ENCODE measurements at regions of chr11 and their contacts with region 1.

Region 1: DNA sequence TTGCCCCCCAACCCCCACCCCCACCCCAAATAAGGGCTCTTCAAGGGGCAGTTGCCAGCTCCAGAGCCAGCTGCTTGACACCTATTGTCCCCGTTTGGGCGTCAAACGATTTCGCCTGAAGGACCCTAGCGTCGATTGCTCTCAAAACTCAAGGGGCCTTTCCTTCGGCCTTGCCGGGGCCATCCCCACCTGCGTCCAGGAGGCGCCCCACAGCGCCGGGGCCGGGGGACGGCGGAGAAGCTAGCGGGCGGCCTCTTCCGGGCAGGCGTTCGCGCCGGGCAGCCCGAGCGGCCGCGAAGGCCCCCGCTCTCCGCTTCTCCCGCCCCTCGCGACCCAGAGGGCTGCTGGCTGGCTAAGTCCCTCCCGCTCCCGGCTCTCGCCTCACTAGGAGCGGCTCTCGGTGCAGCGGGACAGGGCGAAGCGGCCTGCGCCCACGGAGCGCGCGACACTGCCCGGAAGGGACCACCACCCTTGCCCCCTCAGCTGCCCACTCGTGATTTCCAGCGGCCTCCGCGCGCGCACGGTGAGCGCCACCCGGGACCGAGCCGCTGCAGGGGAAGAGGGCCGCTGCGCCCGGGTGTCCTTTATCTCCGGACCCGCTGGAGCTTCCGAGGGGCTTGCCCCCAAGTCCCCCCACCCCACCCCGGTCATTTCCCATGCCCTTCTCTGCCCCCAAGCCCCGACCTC is at the start of gene CAPRIN1:
- DNase-seq: peak; percentile 89
- H3K4me3 ChIP-seq: peak within 1 kb of the TSS; percentile 65 to 97 (median 97)
- H3K27ac ChIP-seq: peak within 1 kb of the TSS; percentile 100
- H3K4me1 ChIP-seq: peaks cover 34% of the 10 kb centered on the region
- H3K27me3 ChIP-seq: no peaks in the 10 kb centered on the region
- CTCF ChIP-seq: no peak
- POLR2A ChIP-seq: peak; percentile 86
- total RNA-seq, gene CAPRIN1: 240 and 279 TPM in 2 replicates

Region 2: DNA sequence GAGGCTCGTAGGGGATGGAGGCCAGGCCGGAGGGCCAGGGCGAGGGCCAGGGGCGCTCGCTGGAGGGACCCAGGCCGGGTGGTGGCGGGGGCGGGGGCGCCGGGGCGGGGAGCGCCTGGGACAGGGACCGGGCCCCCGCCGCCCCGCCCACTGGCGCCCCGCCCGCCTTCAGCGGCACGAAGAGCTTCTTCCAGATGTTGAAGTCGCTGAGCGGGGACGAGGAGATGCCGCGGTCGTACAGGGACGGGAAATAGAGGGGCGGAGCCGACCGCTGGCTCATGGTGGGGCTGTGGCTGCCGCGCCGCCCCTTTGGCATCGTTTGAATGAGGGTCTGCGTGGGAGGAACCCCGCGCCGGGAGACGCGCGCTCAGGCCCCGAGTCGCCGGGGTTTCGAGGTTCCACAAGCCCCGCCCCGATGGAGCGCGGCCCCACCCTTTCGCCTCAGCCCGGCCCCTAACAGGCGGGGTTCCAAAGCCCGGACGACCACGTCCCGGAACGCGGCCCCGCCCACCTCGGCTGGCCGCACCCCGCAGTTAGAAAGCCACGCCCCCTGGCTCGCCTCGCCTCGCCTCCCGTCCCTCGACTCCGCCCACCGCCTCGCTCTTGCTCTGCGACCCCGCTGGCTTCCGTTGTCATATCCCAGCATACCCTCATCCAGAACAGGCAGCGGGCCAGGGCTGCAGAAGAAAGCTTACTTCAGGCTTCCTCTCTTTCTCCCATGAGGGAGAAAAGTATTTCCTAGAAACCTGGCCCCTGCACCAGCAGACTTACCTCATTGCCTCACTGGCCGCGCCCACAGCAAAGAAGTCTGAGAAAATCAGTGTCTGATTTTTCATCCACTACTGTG is 350.8 kb before region 1 on chr11 and contains the start of gene C11orf91:
- CTCF ChIA-PET with region 1: no interaction called
- POLR2A ChIA-PET with region 1: no interaction called
- dilution Hi-C with region 1: no loop called
- intact Hi-C with region 1: loop called (anchors 5 kb)
- DNase-seq: peak; percentile 98
- H3K4me3 ChIP-seq: peak within 1 kb of the TSS in 2 of 3 experiments; percentile 8 to 38
- H3K27ac ChIP-seq: peak within 1 kb of the TSS; percentile 89
- H3K4me1 ChIP-seq: peaks cover 52% of the 10 kb centered on the region
- H3K27me3 ChIP-seq: no peaks in the 10 kb centered on the region
- CTCF ChIP-seq: no peak
- POLR2A ChIP-seq: peak; percentile 88
- total RNA-seq, gene C11orf91: 1.4 and 2.1 TPM in 2 replicates

Region 3: GRCh38 chr11:33930317-33931021 is 121.0 kb before region 1 on chr11:
- CTCF ChIA-PET with region 1: no interaction called
- POLR2A ChIA-PET with region 1: no interaction called
- dilution Hi-C with region 1: no loop called
- intact Hi-C with region 1: loop called (anchors 5 kb)
- DNase-seq: peak; percentile 98
- H3K4me3 ChIP-seq: peak overlapping the region in 1 of 3 experiments; percentile 15
- H3K27ac ChIP-seq: peak overlapping the region; percentile 97
- H3K4me1 ChIP-seq: peaks cover 48% of the 10 kb centered on the region
- H3K27me3 ChIP-seq: no peaks in the 10 kb centered on the region
- CTCF ChIP-seq: no peak
- POLR2A ChIP-seq: peak; percentile 68

Region 4: DNA sequence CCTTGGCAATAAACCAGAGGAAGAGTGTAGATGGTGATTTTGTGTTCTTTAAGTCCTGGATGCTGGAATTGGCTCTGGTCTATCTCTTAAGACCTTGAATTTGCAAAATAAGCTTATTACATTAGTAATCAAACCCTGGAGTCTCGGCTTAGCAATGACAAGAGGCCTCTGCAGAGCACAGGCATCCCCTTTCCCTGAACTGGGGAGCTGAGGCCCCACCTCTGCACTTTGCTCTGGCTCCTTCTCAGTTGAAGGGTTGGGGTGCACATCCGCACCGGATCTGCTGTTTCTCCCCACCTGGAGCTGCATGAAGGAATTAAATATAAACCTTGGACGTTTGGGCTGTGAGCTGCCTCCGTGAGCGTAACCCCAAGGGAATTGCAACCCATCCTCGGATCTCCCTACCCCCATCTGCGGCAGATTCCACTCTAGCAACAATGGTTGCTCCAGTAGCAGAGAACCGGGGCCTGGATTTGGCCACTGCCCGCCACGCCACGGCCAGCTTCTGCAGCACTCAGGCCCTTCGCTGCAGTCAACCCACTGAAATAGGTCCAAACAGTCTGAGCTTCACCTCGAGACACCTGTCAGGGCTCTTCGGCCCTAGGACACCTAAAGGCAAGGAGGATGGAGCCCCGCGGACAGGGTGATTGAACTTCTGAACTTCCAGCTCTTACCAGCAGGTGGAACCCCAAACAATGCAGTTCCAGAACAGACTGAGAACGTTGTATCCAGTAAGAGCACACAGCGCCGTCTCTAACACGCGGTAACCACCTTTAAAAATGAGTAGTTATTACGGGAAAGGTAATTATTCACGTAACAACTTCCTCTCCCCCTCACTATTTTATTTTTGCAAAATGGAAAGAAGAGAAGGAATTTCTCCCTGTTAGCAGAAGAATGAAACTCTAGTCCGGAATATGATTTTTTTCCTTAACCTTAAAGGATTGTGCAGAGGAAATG is 54.7 kb before region 1 on chr11:
- CTCF ChIA-PET with region 1: interaction called, 5 read pairs
- POLR2A ChIA-PET with region 1: no interaction called
- dilution Hi-C with region 1: no loop called
- intact Hi-C with region 1: loop called (anchors 1 kb)
- DNase-seq: peak; percentile 75
- H3K4me3 ChIP-seq: no peak overlapping the region
- H3K27ac ChIP-seq: no peak overlapping the region
- H3K4me1 ChIP-seq: no peaks in the 10 kb centered on the region
- H3K27me3 ChIP-seq: peaks cover 20 to 27% of the 10 kb centered on the region in 2 experiments
- CTCF ChIP-seq: peak; percentile 63 to 77
- POLR2A ChIP-seq: no peak

Region 5: DNA sequence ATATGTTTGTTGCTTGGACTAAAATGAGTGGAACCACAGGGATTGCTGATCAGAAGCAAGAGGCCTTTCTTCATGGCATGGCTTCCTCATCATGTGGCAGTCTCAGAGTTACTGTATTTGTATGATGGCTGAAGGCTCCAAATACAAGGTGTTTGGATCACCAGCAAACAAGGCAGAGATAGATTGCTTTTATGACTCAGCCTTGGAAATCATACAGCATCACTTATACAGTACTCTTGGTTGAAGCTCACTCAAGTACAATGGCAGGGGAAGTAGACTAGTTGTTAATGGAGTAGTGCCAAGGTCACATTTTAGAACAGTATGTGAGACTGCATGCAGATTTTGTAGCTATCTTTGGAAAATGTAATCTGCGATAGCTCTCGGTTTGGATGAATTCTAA is 16.6 kb after region 1 on chr11:
- CTCF ChIA-PET with region 1: interaction called, 5 read pairs
- POLR2A ChIA-PET with region 1: interaction called, 5 read pairs
- dilution Hi-C with region 1: no loop called
- intact Hi-C with region 1: loop called (anchors 1 kb)
- DNase-seq: peak; percentile 93
- H3K4me3 ChIP-seq: peak overlapping the region in 1 of 3 experiments; percentile 30
- H3K27ac ChIP-seq: peak overlapping the region; percentile 57
- H3K4me1 ChIP-seq: peaks cover 41% of the 10 kb centered on the region
- H3K27me3 ChIP-seq: no peaks in the 10 kb centered on the region
- CTCF ChIP-seq: no peak
- POLR2A ChIP-seq: no peak

Region 6: GRCh38 chr11:34105079-34105956 is 53.8 kb after region 1 on chr11 and contains the start of gene NAT10:
- CTCF ChIA-PET with region 1: no interaction called
- POLR2A ChIA-PET with region 1: no interaction called
- dilution Hi-C with region 1: no loop called
- intact Hi-C with region 1: loop called (anchors 1 kb)
- DNase-seq: peak; percentile 99
- H3K4me3 ChIP-seq: peak within 1 kb of the TSS; percentile 27 to 79 (median 71)
- H3K27ac ChIP-seq: peak within 1 kb of the TSS; percentile 44
- H3K4me1 ChIP-seq: peaks cover 19% of the 10 kb centered on the region
- H3K27me3 ChIP-seq: no peaks in the 10 kb centered on the region
- CTCF ChIP-seq: peak in 1 of 2 donors; percentile 16
- POLR2A ChIP-seq: peak; percentile 99
- total RNA-seq, gene NAT10: 54.9 and 57.6 TPM in 2 replicates

Region 7: DNA sequence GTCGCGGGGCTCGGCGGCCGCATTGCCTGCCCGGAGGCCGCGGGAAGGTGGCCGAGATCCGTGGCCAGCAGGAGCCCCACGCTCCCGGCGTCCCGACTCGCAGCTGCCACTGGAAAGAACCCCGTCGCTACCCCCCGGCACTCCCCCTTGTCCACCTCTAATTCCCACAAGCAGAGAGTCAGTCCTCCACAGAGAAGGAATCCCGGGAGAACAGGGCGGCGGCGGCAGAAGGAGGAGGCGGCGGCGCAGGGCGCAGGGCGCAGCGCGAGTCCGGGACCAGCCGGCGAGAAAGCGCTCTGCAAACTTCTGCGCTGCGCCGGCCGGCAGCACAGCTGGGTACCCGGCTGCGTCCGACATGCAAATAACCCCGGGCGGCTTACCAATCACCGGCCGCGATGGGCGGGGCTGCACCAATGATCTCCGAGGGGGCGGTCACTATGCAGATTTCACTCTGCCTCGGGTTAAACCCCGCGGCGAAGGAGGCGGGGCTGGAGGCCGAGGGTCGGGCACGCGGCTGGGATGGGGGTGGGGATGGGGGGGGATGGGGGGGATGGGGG is 306.3 kb after region 1 on chr11 and contains the start of gene ABTB2:
- CTCF ChIA-PET with region 1: no interaction called
- POLR2A ChIA-PET with region 1: no interaction called
- dilution Hi-C with region 1: no loop called
- intact Hi-C with region 1: loop called (anchors 5 kb)
- DNase-seq: peak; percentile 96
- H3K4me3 ChIP-seq: peak within 1 kb of the TSS in 2 of 3 experiments; percentile 26 to 29
- H3K27ac ChIP-seq: no peak within 1 kb of the TSS
- H3K4me1 ChIP-seq: peaks cover 14% of the 10 kb centered on the region
- H3K27me3 ChIP-seq: peaks cover 24 to 40% of the 10 kb centered on the region in 2 experiments
- CTCF ChIP-seq: no peak
- POLR2A ChIP-seq: peak; percentile 69
- total RNA-seq, gene ABTB2: 0.11 and 0.25 TPM in 2 replicates

Measured in endothelial cell of umbilical vein (primary cell).